ENCODE measurements at regions of chr1 and their contacts with region 1.

Region 1: GRCh38 chr1:19341201-19342072 is 29.3 kb downstream of the SLC66A1 start:
- DNase-seq: peak; percentile 74
- ATAC-seq: peak; percentile 42 to 64

Region 2: DNA sequence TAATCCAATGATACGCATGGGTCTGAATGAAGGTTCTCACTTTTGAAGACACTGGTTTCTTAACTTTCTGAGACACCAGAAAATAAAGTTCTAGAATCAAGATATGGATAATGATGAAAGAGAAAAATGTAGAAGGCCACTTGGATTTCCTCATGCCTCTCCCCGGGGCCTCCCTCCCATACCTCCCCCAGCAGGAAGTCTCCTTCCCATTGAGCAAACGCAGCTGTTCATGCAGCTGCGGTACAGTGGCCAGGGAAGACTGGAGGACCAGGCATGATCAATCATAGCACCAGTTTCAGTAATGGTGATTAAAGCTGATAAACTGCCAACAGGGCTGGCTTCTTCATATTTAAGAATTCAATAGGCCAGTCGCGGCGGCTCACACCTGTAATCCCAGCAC is 120.4 kb before region 1 on chr1:
- intact Hi-C with region 1: no loop called
- DNase-seq: peak; percentile 37
- ATAC-seq: peak; percentile 57 to 65

Region 3: DNA sequence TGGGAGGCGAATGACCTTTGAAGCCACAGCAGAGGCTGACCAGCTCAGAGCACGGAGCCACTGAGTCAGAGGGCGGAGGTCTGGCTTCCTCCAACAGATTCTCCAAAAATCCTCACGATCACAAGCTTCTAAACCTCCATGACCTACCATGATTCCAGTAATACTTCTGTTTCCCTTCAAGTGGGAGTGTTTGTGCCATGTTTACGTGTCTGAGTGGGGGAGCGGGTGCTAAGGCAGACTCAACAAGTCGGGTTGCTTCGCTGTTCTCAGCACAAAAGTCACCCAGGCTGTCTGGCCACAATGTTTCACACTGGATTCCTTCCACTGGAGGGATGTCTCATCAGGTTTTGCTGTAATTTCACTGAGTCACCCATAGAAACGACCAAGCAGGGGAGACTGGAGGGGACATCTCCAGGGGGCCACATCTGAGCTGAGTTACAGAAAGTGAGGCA is 56.9 kb after region 1 on chr1:
- intact Hi-C with region 1: loop called in 1 of 2 experiments (anchors 5 kb)
- DNase-seq: no peak
- ATAC-seq: peak in 1 of 2 donors; percentile 52

Region 4: GRCh38 chr1:19448491-19449439 is 107.3 kb after region 1 on chr1:
- intact Hi-C with region 1: no loop called
- DNase-seq: peak; percentile 62
- ATAC-seq: peak; percentile 43 to 58

Measured in left cardiac atrium (tissue), 4 donors.